Activated CD4-positive, alpha-beta memory T cell treated with anti-CD3 and anti-CD28 coated beads for 36 hours (primary cell): ENCODE measurements at regions of chr15 and their contacts with region 1.

Region 1: GRCh38 chr15:55661428-55661827 is 73.3 kb upstream of the PYGO1 start:
- DNase-seq: peak; percentile 39
- H3K4me3 Mint-ChIP-seq: no peak overlapping the region
- H3K27ac Mint-ChIP-seq: no peak overlapping the region
- H3K4me1 Mint-ChIP-seq: peaks cover 18% of the 10 kb centered on the region
- H3K27me3 Mint-ChIP-seq: no peaks in the 10 kb centered on the region

Region 2: GRCh38 chr15:55681631-55682030 is 20.2 kb after region 1 on chr15:
- CTCF ChIA-PET with region 1: no interaction called
- POLR2A ChIA-PET with region 1: no interaction called
- intact Hi-C with region 1: loop called (anchors 1 kb)
- DNase-seq: no peak
- H3K4me3 Mint-ChIP-seq: no peak overlapping the region
- H3K27ac Mint-ChIP-seq: no peak overlapping the region
- H3K4me1 Mint-ChIP-seq: no peaks in the 10 kb centered on the region
- H3K27me3 Mint-ChIP-seq: no peaks in the 10 kb centered on the region

Region 3: DNA sequence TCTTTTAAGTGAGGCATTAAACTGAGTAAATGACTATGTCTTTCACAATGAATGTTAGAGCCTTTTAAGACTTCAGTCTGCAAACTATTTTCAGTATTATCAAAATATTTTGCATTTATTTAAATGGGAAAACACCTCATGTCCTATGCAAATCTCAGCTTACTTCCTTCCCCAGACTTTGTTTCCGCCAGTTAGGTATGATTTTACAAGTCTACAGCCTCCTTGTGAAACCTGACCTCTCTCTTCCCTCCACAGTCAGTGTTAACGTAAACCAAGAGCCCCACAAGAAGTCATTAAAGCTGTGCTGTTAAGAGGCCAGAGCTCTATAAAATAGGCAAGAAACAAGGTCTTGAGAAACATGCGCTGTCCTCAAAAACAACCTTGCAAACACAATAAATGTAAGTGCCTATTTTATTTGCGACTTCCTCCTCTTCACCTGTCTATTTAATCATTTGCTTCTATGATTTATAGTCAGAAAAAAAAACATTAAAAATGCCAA is 33.3 kb after region 1 on chr15:
- CTCF ChIA-PET with region 1: no interaction called
- POLR2A ChIA-PET with region 1: no interaction called
- intact Hi-C with region 1: loop called (anchors 5 kb)
- DNase-seq: no peak
- H3K4me3 Mint-ChIP-seq: no peak overlapping the region
- H3K27ac Mint-ChIP-seq: no peak overlapping the region
- H3K4me1 Mint-ChIP-seq: peaks cover 4% of the 10 kb centered on the region
- H3K27me3 Mint-ChIP-seq: peaks cover 2% of the 10 kb centered on the region

Region 4: DNA sequence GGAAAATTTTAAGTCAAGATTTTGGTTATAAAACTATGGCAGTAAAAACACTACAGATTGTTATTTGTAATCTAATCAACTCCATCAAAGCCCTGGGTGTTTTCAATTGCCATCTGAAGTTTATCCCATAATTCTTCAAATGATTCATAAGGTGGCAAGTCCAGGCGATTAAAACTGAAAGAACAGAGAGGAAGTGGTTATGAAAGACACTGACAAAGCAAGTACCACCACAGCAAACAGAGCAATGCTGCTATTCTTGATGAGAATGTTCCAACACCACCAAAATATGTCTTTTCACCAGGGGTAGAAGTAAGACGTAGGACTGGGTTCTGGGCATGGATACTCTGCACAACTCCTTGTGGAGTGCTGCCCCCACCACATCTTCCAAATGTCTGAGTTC is 168.4 kb after region 1 on chr15:
- CTCF ChIA-PET with region 1: no interaction called
- POLR2A ChIA-PET with region 1: no interaction called
- intact Hi-C with region 1: no loop called
- DNase-seq: no peak
- H3K4me3 Mint-ChIP-seq: no peak overlapping the region
- H3K27ac Mint-ChIP-seq: peak overlapping the region; percentile 33
- H3K4me1 Mint-ChIP-seq: peaks cover 17% of the 10 kb centered on the region
- H3K27me3 Mint-ChIP-seq: no peaks in the 10 kb centered on the region